ENCODE measurements at regions of chr3 and their contacts with region 1.

Region 1: GRCh38 chr3:14467814-14468620 is 65.6 kb downstream of the SLC6A6 start:
- DNase-seq: peak; percentile 43
- ATAC-seq: peak; percentile 69

Region 2: GRCh38 chr3:13822042-13822441 is 646.0 kb before region 1 on chr3:
- intact Hi-C with region 1: no loop called
- DNase-seq: no peak
- ATAC-seq: no peak

Region 3: DNA sequence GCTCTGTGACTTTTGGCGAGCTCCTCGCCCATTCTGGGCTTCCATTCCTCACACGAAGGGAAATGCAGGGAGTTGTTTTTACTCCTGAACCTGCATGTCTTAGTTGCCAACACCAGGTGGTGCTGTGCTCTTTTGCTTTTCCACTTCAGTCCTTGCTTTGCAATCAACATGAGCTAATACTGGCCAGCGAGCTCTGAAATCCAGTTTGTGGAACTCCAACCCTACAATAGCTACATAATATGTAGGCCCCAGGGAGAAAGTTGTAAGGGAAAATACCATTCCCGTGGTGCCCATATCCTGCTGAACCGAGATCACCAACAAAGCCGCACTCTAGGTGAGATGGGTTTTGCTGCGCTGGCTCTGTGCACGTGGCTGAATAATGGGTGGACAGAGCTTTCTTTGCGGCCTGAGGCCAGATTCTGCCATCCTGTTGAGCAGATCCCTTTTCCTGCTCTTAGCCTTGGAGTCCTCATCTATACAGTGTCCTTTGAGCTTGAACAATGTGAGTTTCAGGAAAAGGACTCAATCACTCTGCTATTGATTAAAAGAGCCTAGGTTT is 264.4 kb before region 1 on chr3:
- intact Hi-C with region 1: loop called (anchors 5 kb)
- DNase-seq: peak; percentile 45
- ATAC-seq: peak; percentile 80

Region 4: DNA sequence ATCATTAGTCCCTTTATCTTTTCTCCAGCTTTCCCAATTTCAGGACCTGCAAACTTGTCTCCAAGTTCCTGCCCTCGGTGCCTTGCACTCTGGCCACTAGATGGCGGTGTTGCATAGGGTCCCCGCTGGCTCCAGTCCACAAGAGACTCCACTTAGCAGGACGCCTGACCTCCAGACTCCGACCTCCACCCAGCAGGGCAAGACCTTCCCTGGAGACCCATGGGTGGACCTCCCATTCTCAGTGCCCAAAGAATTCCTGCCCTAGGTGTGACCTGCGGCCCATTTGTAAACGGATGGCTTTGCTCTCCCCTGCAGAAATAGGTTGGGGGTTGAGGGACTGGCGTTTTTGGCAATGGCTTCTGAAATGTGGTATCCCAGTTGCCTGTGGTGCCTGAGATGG is 206.8 kb before region 1 on chr3:
- intact Hi-C with region 1: loop called (anchors 5 kb)
- DNase-seq: peak; percentile 88
- ATAC-seq: peak; percentile 94

Measured in left ventricle myocardium superior (tissue), 1 donor.